ENCODE measurements at regions of chrX and their contacts with region 1.

Region 1: GRCh38 chrX:49850028-49850427 is 20.9 kb downstream of the PAGE4 start:
- DNase-seq: no peak
- ATAC-seq: peak; percentile 36; the same call in 2 of the 3 replicates
- H3K4me3 ChIP-seq: no peak overlapping the region
- H3K27ac ChIP-seq: no peak overlapping the region
- H3K4me1 ChIP-seq: no peaks in the 10 kb centered on the region
- H3K27me3 ChIP-seq: no peaks in the 10 kb centered on the region
- CTCF ChIP-seq: no peak
- EP300 ChIP-seq: no peak
- POLR2A ChIP-seq: no peak
- RAD21 ChIP-seq: no peak

Region 2: DNA sequence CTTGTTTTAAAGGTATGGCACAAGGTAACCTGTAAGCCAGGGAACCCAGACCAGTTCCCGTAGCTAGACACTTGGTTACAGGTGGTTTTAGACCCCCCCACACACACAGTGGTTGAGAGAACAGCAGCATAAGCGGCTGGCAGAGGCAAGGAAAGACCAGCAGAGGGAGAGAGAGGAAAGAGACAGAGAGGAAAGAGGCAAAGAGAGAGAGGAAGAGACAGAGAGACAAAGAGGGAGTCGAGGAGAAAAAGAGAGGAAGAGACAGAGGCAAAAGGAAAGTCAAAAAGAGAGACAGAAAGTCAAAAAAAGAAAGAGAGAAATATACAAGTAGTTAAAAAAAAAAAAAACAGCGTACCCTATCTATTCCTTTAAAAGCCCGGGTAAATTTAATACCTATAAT is 995.1 kb before region 1 on chrX:
- CTCF ChIA-PET with region 1: no interaction called
- POLR2A ChIA-PET with region 1: no interaction called
- RAD21 ChIA-PET with region 1: no interaction called
- SMC1A ChIA-PET with region 1: no interaction called
- in situ Hi-C with region 1: loop called (anchors 25 kb)
- intact Hi-C with region 1: no loop called
- DNase-seq: no peak
- ATAC-seq: no peak
- H3K4me3 ChIP-seq: no peak overlapping the region
- H3K27ac ChIP-seq: no peak overlapping the region
- H3K4me1 ChIP-seq: no peaks in the 10 kb centered on the region
- H3K27me3 ChIP-seq: no peaks in the 10 kb centered on the region
- CTCF ChIP-seq: 0 out of 6 replicates have a peak, but pooled peaks of 2 of the 3 experiments have one; percentile 4
- EP300 ChIP-seq: no peak
- POLR2A ChIP-seq: no peak
- RAD21 ChIP-seq: no peak

Region 3: GRCh38 chrX:49958727-49959485 is 108.9 kb after region 1 on chrX:
- CTCF ChIA-PET with region 1: no interaction called
- POLR2A ChIA-PET with region 1: no interaction called
- RAD21 ChIA-PET with region 1: no interaction called
- SMC1A ChIA-PET with region 1: no interaction called
- in situ Hi-C with region 1: no loop called
- intact Hi-C with region 1: no loop called
- DNase-seq: no peak
- ATAC-seq: no peak
- H3K4me3 ChIP-seq: no peak overlapping the region
- H3K27ac ChIP-seq: peak overlapping the region; percentile 19; the same call in 1 of the 2 replicates
- H3K4me1 ChIP-seq: no peaks in the 10 kb centered on the region
- H3K27me3 ChIP-seq: no peaks in the 10 kb centered on the region
- CTCF ChIP-seq: no peak
- EP300 ChIP-seq: no peak
- POLR2A ChIP-seq: no peak
- RAD21 ChIP-seq: no peak